Activated T-helper 2 cell treated with anti-CD3 and anti-CD28 coated beads, Interferon-gamma antibody, Interleukin-2, Interleukin-4, amounts not matched to agents 10 μg/mL and 5 μg/mL and 100 μg/mL, durations not matched to agents 14 hours and 24 hours and 36 hours (primary cell): ENCODE measurements at regions of chr3 and their contacts with region 1.

Region 1: DNA sequence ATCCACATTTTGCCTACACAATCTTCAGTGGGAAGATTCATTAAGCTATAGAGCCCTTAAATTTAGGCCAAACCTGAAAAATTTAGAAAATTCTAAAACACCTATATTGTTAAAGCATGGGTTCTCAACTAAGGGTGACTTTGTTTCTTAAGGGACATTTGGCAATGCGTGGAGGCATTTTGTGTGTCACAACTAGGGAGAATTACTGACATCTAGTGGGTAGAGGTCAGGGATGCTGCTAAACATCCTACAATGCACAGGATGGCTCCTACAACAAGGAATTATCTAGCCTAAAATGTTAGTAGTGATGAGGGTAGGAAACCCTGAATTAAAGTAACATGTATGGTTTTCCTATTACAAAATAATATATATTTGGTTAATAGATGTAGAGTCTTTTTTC is 55.8 kb downstream of the TBC1D5 start:
- DNase-seq: no peak
- H3K4me3 Mint-ChIP-seq: no peak overlapping the region
- H3K27ac Mint-ChIP-seq: no peak overlapping the region
- H3K4me1 Mint-ChIP-seq: peaks cover 2% of the 10 kb centered on the region
- H3K27me3 Mint-ChIP-seq: no peaks in the 10 kb centered on the region

Region 2: DNA sequence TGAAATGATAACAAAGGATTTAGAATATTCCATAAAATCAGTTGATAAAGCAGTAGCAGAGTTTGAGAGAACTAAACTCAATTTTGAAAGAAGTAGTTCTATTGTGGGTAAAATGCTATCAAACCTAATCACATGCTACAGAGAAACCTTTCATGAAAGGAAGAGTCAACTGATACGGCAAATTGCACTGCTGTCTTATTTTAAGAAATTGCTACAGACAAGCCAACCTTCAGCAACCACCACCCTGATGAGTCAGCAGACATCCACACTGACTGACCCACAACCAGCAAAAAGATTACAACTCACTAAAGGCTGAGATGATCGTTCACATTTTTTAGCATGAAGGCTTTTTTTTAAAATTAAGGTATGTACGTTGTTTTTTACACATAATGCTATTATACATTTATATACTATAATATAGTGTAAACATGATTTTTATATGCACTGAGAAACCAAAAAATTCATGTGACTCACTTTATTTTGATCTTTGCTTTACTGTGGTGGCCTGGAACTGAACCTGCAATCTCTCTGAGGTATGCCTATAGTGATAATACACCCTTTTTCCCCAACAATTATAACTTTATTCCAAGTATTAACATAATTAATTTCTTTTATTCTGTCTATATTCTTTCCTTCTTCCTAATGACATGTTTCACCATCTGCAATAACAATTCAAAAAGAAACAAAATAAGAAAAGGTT is 54.1 kb before region 1 on chr3:
- intact Hi-C with region 1: no loop called
- DNase-seq: no peak
- H3K4me3 Mint-ChIP-seq: no peak overlapping the region
- H3K27ac Mint-ChIP-seq: no peak overlapping the region
- H3K4me1 Mint-ChIP-seq: peaks cover 11% of the 10 kb centered on the region
- H3K27me3 Mint-ChIP-seq: no peaks in the 10 kb centered on the region

Region 3: DNA sequence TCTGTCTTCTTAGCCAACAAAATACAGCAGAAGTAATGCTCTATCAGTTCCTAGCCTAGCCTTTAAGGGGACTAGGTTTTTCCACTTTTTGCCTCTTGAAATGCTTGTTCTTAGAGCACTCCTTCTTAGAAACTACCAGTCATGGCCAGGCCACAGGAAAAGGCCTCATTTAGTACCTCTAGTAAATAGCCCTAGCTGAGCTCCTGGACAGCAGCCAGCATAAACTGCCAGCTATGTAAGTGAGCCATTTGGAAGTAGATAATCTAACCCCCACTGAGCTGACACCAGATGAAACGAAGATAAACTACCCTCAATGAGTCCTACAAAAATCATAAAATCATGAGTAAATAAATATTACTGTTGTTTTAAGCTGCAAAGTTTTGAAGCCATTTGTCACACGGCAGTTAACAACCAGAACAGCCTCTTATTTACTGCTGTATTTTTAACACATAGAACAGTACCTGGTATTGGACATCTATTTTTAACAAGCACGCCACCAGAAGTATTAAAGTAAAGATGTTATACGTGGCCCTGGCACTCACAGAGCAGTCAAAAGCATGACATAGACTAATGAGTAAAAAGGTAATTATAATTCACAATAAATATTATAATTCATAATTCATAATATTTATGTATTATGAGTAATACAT is 43.8 kb after region 1 on chr3:
- intact Hi-C with region 1: loop called (anchors 10 kb)
- DNase-seq: no peak
- H3K4me3 Mint-ChIP-seq: no peak overlapping the region
- H3K27ac Mint-ChIP-seq: no peak overlapping the region
- H3K4me1 Mint-ChIP-seq: peaks cover 22% of the 10 kb centered on the region
- H3K27me3 Mint-ChIP-seq: no peaks in the 10 kb centered on the region